Activated CD4-positive, alpha-beta T cell treated with anti-CD3 and anti-CD28 coated beads, Interleukin-2, amount 10 ng/mL, durations not matched to agents 24 days and 14 days (primary cell): ENCODE measurements at regions of chr1 and their contacts with region 1.

Region 1: GRCh38 chr1:204941421-204942338 is 71.0 kb downstream of the NFASC start:
- DNase-seq: peak; percentile 85
- H3K4me3 Mint-ChIP-seq: no peak overlapping the region
- H3K27ac Mint-ChIP-seq: no peak overlapping the region
- H3K4me1 Mint-ChIP-seq: no peaks in the 10 kb centered on the region
- H3K27me3 Mint-ChIP-seq: peaks cover 7% of the 10 kb centered on the region

Region 2: DNA sequence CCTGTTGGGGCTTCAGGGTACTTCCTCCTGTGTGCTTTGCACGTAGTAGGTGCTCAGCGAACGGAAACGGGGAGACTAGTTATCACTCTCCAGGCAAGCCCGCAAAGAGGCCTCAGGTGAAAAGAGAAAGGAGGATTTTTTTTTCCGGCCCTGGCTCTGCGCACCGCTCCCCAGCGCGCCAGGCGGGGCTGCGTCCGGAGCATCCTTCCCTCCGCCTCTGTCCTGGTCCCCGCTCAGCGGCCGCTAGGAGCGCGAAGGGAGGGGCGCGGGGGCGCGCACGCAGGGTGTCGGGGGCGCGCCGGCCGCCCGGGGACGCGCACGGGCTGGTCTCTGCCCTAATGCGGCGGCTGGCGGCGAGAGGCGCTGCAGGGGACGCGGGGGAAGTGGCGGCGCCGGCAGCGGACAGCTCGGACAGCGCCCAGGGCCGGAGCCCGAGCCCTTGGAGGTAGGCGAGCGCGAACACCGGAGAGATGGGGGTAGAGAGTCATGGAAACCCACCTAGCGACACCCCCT is 113.3 kb before region 1 on chr1:
- intact Hi-C with region 1: loop called (anchors 5 kb)
- DNase-seq: peak; percentile 80
- H3K4me3 Mint-ChIP-seq: peak overlapping the region; percentile 70
- H3K27ac Mint-ChIP-seq: no peak overlapping the region
- H3K4me1 Mint-ChIP-seq: peaks cover 6% of the 10 kb centered on the region
- H3K27me3 Mint-ChIP-seq: peaks cover 60% of the 10 kb centered on the region

Region 3: DNA sequence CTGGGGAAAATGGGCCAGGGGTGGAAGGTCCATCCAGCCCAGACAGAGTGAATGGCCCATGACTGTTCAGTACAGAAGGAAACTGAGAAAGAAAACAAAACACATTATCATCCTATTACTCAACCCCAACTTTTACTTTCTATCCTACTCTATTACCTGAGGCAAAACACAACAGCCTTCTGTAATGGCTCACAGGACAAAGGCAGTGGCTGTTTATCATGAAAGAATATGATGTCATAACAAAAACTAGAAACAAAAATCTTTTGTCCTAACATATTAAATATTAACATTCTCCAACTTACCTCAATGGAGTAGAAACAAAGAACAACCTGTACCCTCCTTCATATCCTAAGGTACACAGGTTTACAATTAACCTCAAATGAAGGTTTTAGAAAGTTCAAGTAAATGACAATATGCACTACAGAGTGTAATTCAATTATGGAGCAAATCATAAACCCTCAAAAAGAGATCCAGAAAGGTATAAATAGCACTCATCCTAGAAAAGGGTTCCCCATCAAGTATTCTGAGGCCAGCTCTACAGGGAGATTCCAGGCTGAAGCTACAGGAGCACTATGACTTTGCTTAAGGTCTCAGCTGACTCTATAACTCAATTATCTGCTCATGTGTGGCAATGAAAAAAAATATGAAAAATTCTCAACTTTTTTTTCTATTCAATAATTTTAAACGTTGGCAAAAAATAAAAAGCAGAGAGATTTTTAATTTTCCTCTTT is 675.0 kb after region 1 on chr1:
- intact Hi-C with region 1: no loop called
- DNase-seq: no peak
- H3K4me3 Mint-ChIP-seq: no peak overlapping the region
- H3K27ac Mint-ChIP-seq: peak overlapping the region; percentile 41
- H3K4me1 Mint-ChIP-seq: peaks cover 24% of the 10 kb centered on the region
- H3K27me3 Mint-ChIP-seq: no peaks in the 10 kb centered on the region